A549 (cell line): ENCODE measurements at regions of chr2 and their contacts with region 1.

Region 1: DNA sequence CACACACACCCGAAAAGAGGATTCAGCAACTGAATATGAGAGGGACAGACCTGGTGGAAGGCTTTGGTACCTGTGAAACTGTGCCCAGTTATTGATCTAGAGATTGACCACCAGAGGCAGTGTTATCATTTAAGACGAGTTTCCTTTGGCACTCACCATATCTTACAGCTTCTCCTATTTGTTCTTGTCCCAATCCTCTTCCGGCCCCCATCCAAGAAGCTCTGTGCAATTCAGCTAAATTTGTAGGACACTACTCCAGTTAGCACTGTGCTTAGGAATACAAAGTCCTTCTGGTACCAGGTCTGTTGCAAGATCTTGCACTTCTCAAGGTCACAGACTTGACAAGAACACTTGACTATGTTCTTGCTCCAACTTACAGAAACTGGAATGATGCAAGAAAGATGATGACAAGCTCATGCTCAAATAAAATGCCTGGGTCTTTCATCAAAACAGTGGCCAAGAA is 177.7 kb downstream of the TMEM247 start:
- DNase-seq: peak; percentile 62 to 73
- ATAC-seq: peak; percentile 81 to 85
- H3K4me3 ChIP-seq: no peak overlapping the region
- H3K27ac ChIP-seq: peak overlapping the region; percentile 94 to 97
- H3K4me1 ChIP-seq: peaks cover 36% of the 10 kb centered on the region
- CTCF ChIP-seq: peak; percentile 66
- EP300 ChIP-seq: no peak
- POLR2A ChIP-seq: no peak
- RAD21 ChIP-seq: peak; percentile 75

Region 2: GRCh38 chr2:46690825-46691224 is 33.8 kb after region 1 on chr2:
- CTCF ChIA-PET with region 1: interaction called, 11 read pairs
- POLR2A ChIA-PET with region 1: no interaction called
- DNase-seq: peak; percentile 51 to 68
- ATAC-seq: peak; percentile 89 to 93
- H3K4me3 ChIP-seq: no peak overlapping the region
- H3K27ac ChIP-seq: peak overlapping the region; percentile 51 to 77
- H3K4me1 ChIP-seq: peaks cover 14% of the 10 kb centered on the region
- CTCF ChIP-seq: no peak
- EP300 ChIP-seq: no peak; a peak in 1 of 5 replicates
- POLR2A ChIP-seq: no peak
- RAD21 ChIP-seq: no peak